ENCODE measurements at regions of chr3 and their contacts with region 1.

Region 1: DNA sequence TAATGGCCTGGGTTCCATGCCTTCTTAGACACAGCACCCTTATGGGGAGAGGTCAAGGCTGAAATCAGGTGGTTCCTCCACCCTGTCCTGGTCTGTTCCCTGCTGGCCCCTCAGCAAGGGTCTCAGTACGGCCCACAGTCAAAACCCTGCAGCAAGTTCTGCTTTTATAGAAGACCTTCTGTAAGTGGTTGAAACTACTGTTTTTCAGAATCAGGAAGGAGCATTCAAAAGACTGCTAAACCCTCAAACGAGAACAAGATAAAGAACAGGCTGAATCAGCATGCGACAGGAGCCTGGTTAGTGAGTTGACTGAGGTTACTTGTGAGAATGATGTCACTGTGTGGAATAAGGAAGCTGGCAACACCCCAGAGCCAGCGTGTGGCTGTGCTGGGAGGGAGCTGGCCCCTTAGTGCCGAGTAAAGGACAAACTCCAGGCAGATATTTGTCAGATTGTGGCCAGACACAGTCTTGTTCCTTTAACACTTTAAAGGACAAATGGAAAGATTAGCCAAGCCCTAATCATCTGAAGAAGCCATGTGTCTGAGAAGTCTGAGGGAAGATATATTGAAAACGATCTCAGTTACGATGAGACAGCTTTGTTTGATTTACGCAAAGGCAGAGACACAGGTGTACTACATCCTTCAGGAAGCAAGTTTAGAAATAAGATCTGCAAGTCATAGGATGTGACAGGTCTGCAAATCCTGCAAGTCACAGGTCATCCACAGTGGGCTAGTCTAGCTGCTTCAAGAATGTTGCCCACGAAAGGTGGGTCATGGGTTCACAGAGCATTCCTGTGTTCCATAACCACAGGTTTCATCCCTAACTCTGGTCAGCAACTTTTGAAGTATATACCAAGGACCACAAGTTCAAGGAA is 54.0 kb downstream of the B3GNT5 start:
- DNase-seq: peak; percentile 86 to 99
- H3K4me3 ChIP-seq: peak overlapping the region; percentile 43
- H3K27ac ChIP-seq: peak overlapping the region; percentile 94
- H3K4me1 ChIP-seq: peaks cover 67% of the 10 kb centered on the region
- H3K27me3 ChIP-seq: no peaks in the 10 kb centered on the region
- CTCF ChIP-seq: no peak

Region 2: GRCh38 chr3:183252973-183253901 is 53.8 kb before region 1 on chr3 and contains the start of gene B3GNT5:
- CTCF ChIA-PET with region 1: no interaction called
- POLR2A ChIA-PET with region 1: interaction called, 3 read pairs
- intact Hi-C with region 1: loop called (anchors 1 kb)
- DNase-seq: peak; percentile 82 to 85
- H3K4me3 ChIP-seq: peak within 1 kb of the TSS; percentile 96
- H3K27ac ChIP-seq: peak within 1 kb of the TSS; percentile 93
- H3K4me1 ChIP-seq: peaks cover 31% of the 10 kb centered on the region
- H3K27me3 ChIP-seq: no peaks in the 10 kb centered on the region
- CTCF ChIP-seq: no peak
- total RNA-seq, gene B3GNT5: 30.7 and 33.6 TPM in 2 replicates

Region 3: GRCh38 chr3:183285828-183286457 is 21.1 kb before region 1 on chr3:
- CTCF ChIA-PET with region 1: interaction called, 4 read pairs
- POLR2A ChIA-PET with region 1: interaction called, 16 read pairs
- intact Hi-C with region 1: loop called (anchors 1 kb)
- DNase-seq: peak; percentile 96 to 100
- H3K4me3 ChIP-seq: peak overlapping the region; percentile 58; the same call in 1 of the 2 replicates
- H3K27ac ChIP-seq: peak overlapping the region; percentile 97
- H3K4me1 ChIP-seq: peaks cover 66% of the 10 kb centered on the region
- H3K27me3 ChIP-seq: no peaks in the 10 kb centered on the region
- CTCF ChIP-seq: no peak

Region 4: GRCh38 chr3:183317886-183318865 is 11.1 kb after region 1 on chr3:
- CTCF ChIA-PET with region 1: no interaction called
- POLR2A ChIA-PET with region 1: no interaction called
- intact Hi-C with region 1: loop called (anchors 1 kb)
- DNase-seq: peak in 1 of 2 experiments; percentile 84
- H3K4me3 ChIP-seq: no peak overlapping the region
- H3K27ac ChIP-seq: peak overlapping the region; percentile 71
- H3K4me1 ChIP-seq: peaks cover 55% of the 10 kb centered on the region
- H3K27me3 ChIP-seq: no peaks in the 10 kb centered on the region
- CTCF ChIP-seq: no peak